GM12878 (cell line): ENCODE measurements at regions of chr7 and their contacts with region 1.

Region 1: DNA sequence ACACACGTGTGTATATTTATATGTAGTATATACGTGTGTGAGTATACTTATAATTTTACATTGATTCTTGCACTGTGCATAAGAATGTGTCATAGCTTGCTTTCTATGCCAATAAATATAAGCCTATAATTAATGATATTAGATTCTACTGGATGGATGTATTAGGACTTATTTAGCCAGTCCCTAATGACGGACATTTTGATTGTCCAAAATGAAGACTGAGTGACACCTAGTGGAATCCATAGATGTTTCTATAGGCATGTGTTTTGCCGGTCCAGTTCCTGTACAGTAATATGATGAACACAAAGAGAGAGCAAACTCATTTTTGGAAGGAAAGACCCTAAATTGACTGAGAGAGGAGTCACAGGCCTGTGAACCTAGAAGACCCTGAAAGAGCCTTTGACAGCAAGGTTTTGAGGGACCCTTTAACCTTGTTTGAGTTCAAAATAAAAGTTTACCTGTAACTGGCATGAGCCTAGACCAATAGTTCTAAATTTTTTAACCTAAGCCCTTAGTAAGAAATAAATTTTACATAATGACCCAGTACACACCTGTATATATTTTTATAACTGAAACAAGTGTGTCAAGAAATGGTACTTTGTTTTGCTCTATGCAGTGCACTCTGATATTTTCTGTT is 42.4 kb upstream of the AGBL3 start:
- DNase-seq: no peak
- ATAC-seq: peak; percentile 97
- H3K4me3 ChIP-seq: no peak overlapping the region
- H3K27ac ChIP-seq: no peak overlapping the region
- H3K4me1 ChIP-seq: no peaks in the 10 kb centered on the region
- H3K27me3 ChIP-seq: no peaks in the 10 kb centered on the region
- CTCF ChIP-seq: peak; percentile 49 to 66 (median 55)
- EP300 ChIP-seq: no peak
- POLR2A ChIP-seq: no peak
- RAD21 ChIP-seq: peak; percentile 88

Region 2: GRCh38 chr7:134690016-134690415 is 253.9 kb before region 1 on chr7:
- CTCF ChIA-PET with region 1: interaction called, 31 read pairs
- POLR2A ChIA-PET with region 1: no interaction called
- RAD21 ChIA-PET with region 1: interaction called, 14 read pairs
- SMC1A ChIA-PET with region 1: interaction called, 14 read pairs
- in situ Hi-C with region 1: no loop called
- intact Hi-C with region 1: no loop called
- DNase-seq: no peak
- ATAC-seq: peak; percentile 75
- H3K4me3 ChIP-seq: no peak overlapping the region
- H3K27ac ChIP-seq: no peak overlapping the region
- H3K4me1 ChIP-seq: no peaks in the 10 kb centered on the region
- H3K27me3 ChIP-seq: peaks cover 0 to 2% of the 10 kb centered on the region in 2 experiments; a peak in 1 of 4 replicates
- CTCF ChIP-seq: peak in 1 of 3 experiments; percentile 10; a peak in 1 of 6 replicates
- EP300 ChIP-seq: no peak
- POLR2A ChIP-seq: no peak
- RAD21 ChIP-seq: peak; percentile 41

Region 3: DNA sequence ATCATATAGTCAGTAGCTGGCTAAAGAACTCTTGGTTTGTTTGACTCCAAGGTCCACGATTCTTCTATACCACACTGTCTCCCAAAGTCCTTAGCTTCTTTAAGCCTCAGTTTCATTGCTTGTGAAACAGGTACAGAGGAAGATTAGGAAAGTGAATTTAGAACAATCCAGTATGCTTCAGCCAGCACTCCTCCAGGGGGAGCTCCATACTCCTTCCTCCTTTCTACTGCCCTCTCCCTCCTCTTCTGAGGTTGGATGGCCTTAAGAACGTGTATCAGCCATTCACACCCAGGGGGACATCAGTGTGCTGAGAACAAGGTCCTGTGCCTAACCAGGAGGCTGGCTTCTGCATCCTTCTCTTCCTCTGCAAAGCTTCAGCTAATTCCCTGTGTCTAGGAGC is 219.3 kb before region 1 on chr7:
- CTCF ChIA-PET with region 1: interaction called, 60 read pairs
- POLR2A ChIA-PET with region 1: interaction called, 3 read pairs
- RAD21 ChIA-PET with region 1: interaction called, 16 read pairs
- SMC1A ChIA-PET with region 1: interaction called, 17 read pairs
- in situ Hi-C with region 1: no loop called
- intact Hi-C with region 1: loop called (anchors 1 kb)
- DNase-seq: peak; percentile 11
- ATAC-seq: peak; percentile 85
- H3K4me3 ChIP-seq: no peak overlapping the region
- H3K27ac ChIP-seq: no peak overlapping the region
- H3K4me1 ChIP-seq: no peaks in the 10 kb centered on the region
- H3K27me3 ChIP-seq: no peaks in the 10 kb centered on the region; a peak in 1 of 4 replicates
- CTCF ChIP-seq: peak; percentile 48 to 59 (median 52); a peak in 5 of 6 replicates
- EP300 ChIP-seq: no peak
- POLR2A ChIP-seq: no peak
- RAD21 ChIP-seq: peak; percentile 52

Region 4: DNA sequence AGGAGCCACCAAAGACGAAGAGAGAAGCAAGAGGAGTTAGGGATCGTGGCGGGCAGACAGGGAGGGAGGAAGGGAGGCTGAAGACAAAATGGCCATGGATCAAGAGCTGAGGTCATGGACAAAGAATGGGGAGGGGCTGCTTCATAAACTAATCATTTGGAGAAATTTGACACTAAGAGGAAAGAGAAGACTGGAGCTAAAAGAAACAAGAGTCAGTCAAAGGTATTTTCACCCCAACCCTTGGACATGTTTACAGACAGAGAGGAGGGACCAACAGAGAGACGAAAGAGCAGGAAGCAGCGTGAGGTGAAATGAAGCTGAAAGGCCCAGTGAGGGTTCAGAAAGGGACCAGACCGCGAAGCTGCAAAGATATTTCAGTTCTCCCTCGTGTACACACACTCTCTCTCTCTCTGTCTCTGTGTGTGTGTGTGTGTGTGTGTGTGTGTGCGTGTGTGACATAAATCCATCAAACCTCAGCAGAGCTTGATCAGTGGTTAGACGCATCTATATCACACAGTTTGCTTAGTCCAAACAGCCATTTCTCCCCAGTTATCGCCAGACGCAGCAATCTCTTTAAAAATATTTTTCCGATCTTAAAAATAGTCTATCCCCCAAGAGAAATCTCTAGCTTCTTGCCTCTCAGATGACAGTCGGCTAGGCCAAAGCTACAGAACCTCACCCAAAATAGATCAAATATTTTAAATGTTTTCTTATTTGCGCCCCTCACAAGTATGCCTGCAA is 176.9 kb before region 1 on chr7:
- CTCF ChIA-PET with region 1: no interaction called
- POLR2A ChIA-PET with region 1: no interaction called
- RAD21 ChIA-PET with region 1: interaction called, 3 read pairs
- SMC1A ChIA-PET with region 1: interaction called, 10 read pairs
- in situ Hi-C with region 1: no loop called
- intact Hi-C with region 1: no loop called
- DNase-seq: peak; percentile 40
- ATAC-seq: peak; percentile 85
- H3K4me3 ChIP-seq: no peak overlapping the region
- H3K27ac ChIP-seq: no peak overlapping the region
- H3K4me1 ChIP-seq: peaks cover 8% of the 10 kb centered on the region
- H3K27me3 ChIP-seq: no peaks in the 10 kb centered on the region
- CTCF ChIP-seq: no peak
- EP300 ChIP-seq: no peak
- POLR2A ChIP-seq: no peak
- RAD21 ChIP-seq: no peak

Region 5: GRCh38 chr7:134777470-134777869 is 166.4 kb before region 1 on chr7:
- CTCF ChIA-PET with region 1: no interaction called
- POLR2A ChIA-PET with region 1: no interaction called
- RAD21 ChIA-PET with region 1: no interaction called
- SMC1A ChIA-PET with region 1: no interaction called
- in situ Hi-C with region 1: no loop called
- intact Hi-C with region 1: no loop called
- DNase-seq: no peak
- ATAC-seq: no peak
- H3K4me3 ChIP-seq: no peak overlapping the region
- H3K27ac ChIP-seq: no peak overlapping the region
- H3K4me1 ChIP-seq: peaks cover 4% of the 10 kb centered on the region; the same call in 1 of the 2 replicates
- H3K27me3 ChIP-seq: no peaks in the 10 kb centered on the region
- CTCF ChIP-seq: no peak
- EP300 ChIP-seq: no peak
- POLR2A ChIP-seq: no peak
- RAD21 ChIP-seq: no peak

Region 6: GRCh38 chr7:134900166-134900982 is 43.5 kb before region 1 on chr7:
- CTCF ChIA-PET with region 1: interaction called, 15 read pairs
- POLR2A ChIA-PET with region 1: interaction called, 5 read pairs
- RAD21 ChIA-PET with region 1: interaction called, 42 read pairs
- SMC1A ChIA-PET with region 1: interaction called, 33 read pairs
- in situ Hi-C with region 1: no loop called
- intact Hi-C with region 1: no loop called
- DNase-seq: peak; percentile 35
- ATAC-seq: peak; percentile 83
- H3K4me3 ChIP-seq: peak overlapping the region; percentile 51
- H3K27ac ChIP-seq: peak overlapping the region; percentile 37; the same call in 1 of the 2 replicates
- H3K4me1 ChIP-seq: peaks cover 20% of the 10 kb centered on the region
- H3K27me3 ChIP-seq: no peaks in the 10 kb centered on the region
- CTCF ChIP-seq: no peak
- EP300 ChIP-seq: peak in 1 of 2 experiments; percentile 40; a peak in 1 of 4 replicates
- POLR2A ChIP-seq: no peak
- RAD21 ChIP-seq: no peak

Region 7: GRCh38 chr7:134932707-134933370 is 11.0 kb before region 1 on chr7:
- CTCF ChIA-PET with region 1: interaction called, 16 read pairs
- POLR2A ChIA-PET with region 1: interaction called, 8 read pairs
- RAD21 ChIA-PET with region 1: interaction called, 13 read pairs
- SMC1A ChIA-PET with region 1: interaction called, 35 read pairs
- in situ Hi-C with region 1: no loop called
- intact Hi-C with region 1: no loop called
- DNase-seq: peak; percentile 23
- ATAC-seq: peak; percentile 85
- H3K4me3 ChIP-seq: peak overlapping the region; percentile 16; the same call in 1 of the 2 replicates
- H3K27ac ChIP-seq: peak overlapping the region; percentile 33
- H3K4me1 ChIP-seq: peaks cover 8% of the 10 kb centered on the region; the same call in 1 of the 2 replicates
- H3K27me3 ChIP-seq: no peaks in the 10 kb centered on the region
- CTCF ChIP-seq: no peak
- EP300 ChIP-seq: no peak
- POLR2A ChIP-seq: no peak
- RAD21 ChIP-seq: no peak

Region 8: DNA sequence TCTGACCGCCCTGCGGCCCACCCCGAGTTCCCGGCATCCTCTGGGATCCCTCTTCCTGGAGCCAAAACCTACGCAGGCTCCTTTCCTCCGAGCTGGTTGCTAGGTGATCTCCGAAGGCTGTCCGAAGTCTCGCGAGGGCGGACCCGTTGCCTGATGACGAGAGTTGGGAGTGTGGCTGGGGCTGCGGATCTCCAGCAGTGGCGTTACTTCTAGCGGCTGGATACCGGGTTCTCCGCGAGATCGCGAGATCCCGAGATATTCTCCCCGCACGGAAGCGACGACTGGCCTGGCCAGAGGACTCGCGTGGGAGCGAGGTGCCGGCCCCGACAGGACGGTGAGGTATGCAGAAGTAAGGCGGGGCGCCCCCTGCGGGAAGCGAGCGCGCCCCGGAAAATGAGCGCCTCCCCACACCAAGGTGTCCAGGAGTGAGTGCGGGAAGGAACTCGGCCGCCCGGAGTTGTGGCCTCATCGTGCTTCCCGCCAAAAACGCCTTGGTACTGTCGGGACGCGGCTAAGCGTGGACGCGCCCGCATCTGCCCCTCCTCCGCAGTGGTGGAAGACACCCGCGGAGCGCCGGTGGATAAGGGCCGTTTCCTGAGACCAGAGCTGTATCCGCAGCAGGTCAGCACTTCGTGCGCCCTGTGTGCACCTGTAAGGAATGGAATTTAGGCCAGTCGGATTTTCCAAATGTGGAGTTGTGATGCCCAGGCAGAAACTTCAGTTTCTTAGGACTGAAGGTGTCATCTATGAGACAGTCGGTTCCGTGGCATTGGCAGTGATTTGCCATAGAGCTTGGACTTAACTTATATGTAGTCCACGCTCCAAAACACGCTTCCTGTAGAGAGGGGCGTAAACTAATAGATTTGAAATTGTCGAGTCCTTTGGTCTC is 42.7 kb after region 1 on chr7 and contains the start of gene AGBL3:
- CTCF ChIA-PET with region 1: interaction called, 13 read pairs
- POLR2A ChIA-PET with region 1: interaction called, 6 read pairs
- RAD21 ChIA-PET with region 1: interaction called, 8 read pairs
- SMC1A ChIA-PET with region 1: interaction called, 9 read pairs
- in situ Hi-C with region 1: no loop called
- intact Hi-C with region 1: no loop called
- DNase-seq: peak; percentile 84
- ATAC-seq: peak; percentile 85
- H3K4me3 ChIP-seq: peak within 1 kb of the TSS; percentile 85
- H3K27ac ChIP-seq: peak within 1 kb of the TSS; percentile 97
- H3K4me1 ChIP-seq: peaks cover 11% of the 10 kb centered on the region
- H3K27me3 ChIP-seq: no peaks in the 10 kb centered on the region
- CTCF ChIP-seq: peak; percentile 59 to 75 (median 73)
- EP300 ChIP-seq: peak in 1 of 2 experiments; percentile 41; a peak in 1 of 4 replicates
- POLR2A ChIP-seq: peak; percentile 88
- RAD21 ChIP-seq: no peak
- polyA plus RNA-seq, gene AGBL3: 0.82 to 1.4 TPM